ENCODE measurements at regions of chr7 and their contacts with region 1.

Region 1: GRCh38 chr7:98280791-98281756 is at the start of gene BRI3:
- DNase-seq: peak; percentile 72 to 90 (median 84)
- H3K4me3 ChIP-seq: peak within 1 kb of the TSS; percentile 70 to 99 (median 91)
- H3K27ac ChIP-seq: peak within 1 kb of the TSS; percentile 79 to 98 (median 92)
- H3K27me3 ChIP-seq: no peaks in the 10 kb centered on the region
- CTCF ChIP-seq: peak in 23 of 56 donors; percentile 13 to 55 (median 33)
- total RNA-seq, gene BRI3: 62.3 to 111 (median 85.4) TPM

Region 2: DNA sequence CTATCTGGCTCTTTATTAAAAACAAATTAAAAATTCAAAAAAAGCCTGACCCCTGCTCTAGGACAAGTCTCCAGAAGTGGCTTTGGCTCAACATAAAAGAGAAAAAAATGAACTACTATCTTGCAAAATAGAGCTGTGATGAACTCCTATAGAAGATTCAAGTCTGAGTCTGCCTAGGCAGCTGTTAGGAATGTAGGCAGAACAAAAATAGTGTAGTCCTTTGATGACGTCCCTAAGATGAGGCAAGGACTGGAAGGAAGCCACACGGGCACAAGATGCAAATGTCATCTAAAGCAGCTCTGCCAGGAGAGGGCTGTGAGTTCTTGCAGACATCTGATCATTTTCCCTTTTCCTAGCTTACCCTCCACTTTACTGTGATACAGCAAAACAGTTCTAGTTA is 429.4 kb before region 1 on chr7:
- intact Hi-C with region 1: no loop called
- DNase-seq: peak in 5 of 10 donors; percentile 30 to 80 (median 58)
- H3K4me3 ChIP-seq: no peak overlapping the region
- H3K27ac ChIP-seq: peak overlapping the region in 32 of 59 donors; percentile 4 to 75 (median 46)
- H3K27me3 ChIP-seq: no peaks in the 10 kb centered on the region
- CTCF ChIP-seq: no peak

Region 3: GRCh38 chr7:98021588-98022351 is 259.3 kb before region 1 on chr7:
- intact Hi-C with region 1: no loop called
- DNase-seq: peak; percentile 77 to 89 (median 87)
- H3K4me3 ChIP-seq: no peak overlapping the region
- H3K27ac ChIP-seq: no peak overlapping the region
- H3K27me3 ChIP-seq: peaks cover 0 to 4% (median 0%) of the 10 kb centered on the region in 45 donors
- CTCF ChIP-seq: peak; percentile 92 to 100 (median 97)

Region 4: DNA sequence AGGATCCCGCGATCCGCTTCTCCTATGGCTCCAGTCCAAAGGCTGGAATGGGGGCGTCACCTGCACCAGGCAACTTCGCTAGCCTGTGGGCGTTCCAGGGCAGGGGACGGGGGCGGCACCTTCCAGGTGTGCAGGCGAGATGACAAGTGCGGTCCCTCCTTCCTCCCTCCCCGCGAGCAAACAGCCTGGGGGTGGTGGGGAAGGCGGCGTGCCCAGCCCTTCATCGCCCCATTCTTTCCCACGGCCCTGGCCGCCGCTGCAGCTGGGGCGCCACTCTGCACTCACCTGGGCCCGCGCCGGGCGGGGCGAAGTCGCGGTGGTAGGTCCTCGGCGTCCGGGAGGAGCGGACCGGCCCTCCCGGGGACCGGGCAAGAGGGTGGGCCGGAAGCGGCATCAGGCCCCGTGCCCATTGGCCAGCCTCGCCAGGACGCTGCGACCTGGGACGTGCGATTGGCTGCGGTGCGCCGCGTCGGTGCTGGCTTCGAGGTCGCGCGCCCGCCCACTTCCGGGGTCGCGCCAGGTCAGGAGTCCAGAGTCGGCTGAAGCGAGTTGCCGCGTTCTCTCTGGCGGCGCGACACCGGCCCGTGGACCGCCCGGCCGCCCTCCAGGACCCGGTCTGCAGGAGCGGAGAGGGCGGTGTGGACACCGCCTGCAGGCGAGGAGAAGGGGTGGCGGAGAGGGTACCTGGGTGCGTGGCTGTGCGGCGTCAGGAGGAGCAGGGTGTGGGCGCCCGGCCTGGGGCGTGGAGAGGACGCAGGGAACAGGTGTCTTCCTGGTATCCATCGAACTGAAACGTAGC is 29.0 kb before region 1 on chr7 and contains the start of gene TECPR1:
- intact Hi-C with region 1: loop called (anchors 2 kb)
- DNase-seq: peak; percentile 94 to 99 (median 96)
- H3K4me3 ChIP-seq: peak within 1 kb of the TSS; percentile 67 to 100 (median 96)
- H3K27ac ChIP-seq: peak within 1 kb of the TSS in 45 of 59 donors; percentile 23 to 92 (median 71)
- H3K27me3 ChIP-seq: no peaks in the 10 kb centered on the region
- CTCF ChIP-seq: peak in 13 of 56 donors; percentile 7 to 46 (median 16)
- total RNA-seq, gene TECPR1: 51.1 to 113 (median 76.1) TPM

Measured in dorsolateral prefrontal cortex (tissue), 120 donors.